SK-N-SH (cell line): ENCODE measurements at regions of chr10 and their contacts with region 1.

Region 1: DNA sequence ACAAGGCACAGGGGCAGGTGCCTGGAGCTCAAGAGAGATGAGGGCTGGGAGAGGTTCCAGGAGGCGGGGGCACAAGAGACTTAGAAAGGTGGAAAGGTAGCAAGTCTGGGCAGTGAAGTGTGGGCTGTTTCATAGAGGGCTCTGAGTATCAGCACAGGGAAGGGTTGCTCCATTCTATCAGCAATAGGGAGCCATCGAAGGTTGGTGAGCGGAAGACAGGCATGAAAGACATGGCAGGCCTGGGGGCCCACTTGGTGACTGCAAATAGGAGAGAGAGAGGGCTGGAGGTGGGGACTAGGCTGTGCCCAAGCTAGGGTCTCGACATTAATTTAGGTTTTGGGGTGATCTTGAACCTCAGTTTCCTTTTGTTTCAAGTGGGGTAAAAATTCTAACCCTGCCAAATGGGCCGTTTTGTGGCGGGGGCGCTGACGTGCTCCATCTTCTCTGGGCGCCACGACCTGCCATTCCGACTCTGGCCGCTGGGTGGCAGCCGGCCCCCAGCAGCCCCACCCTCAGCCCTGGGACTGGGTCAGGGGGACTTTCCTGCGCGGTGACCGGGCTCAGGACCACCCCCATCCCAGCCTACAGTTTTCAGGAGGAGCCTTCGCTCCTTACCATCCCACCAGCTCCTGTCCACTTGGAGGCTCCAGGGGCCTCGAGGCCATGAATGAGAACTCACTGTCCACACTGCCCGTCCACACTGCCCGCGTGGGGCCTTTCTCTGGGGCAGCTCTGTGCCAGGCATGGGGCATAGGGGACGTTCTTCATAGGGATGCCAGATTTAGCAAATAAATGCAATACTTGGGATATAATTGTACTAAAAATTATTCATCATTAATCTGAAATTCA is 37.2 kb upstream of the PCBD1 start:
- DNase-seq: peak; percentile 92
- H3K4me3 ChIP-seq: peak overlapping the region in 1 of 2 experiments; percentile 32; a peak in 1 of 4 replicates
- H3K27ac ChIP-seq: no peak overlapping the region
- H3K4me1 ChIP-seq: peaks cover 5 to 19% of the 10 kb centered on the region in 2 experiments; a peak in 2 of 4 replicates
- H3K27me3 ChIP-seq: peaks cover 13% of the 10 kb centered on the region; the same call in 1 of the 2 replicates
- CTCF ChIP-seq: peak; percentile 89
- EP300 ChIP-seq: no peak
- RAD21 ChIP-seq: peak; percentile 89

Region 2: GRCh38 chr10:70391654-70392053 is 533.9 kb before region 1 on chr10:
- CTCF ChIA-PET with region 1: no interaction called
- POLR2A ChIA-PET with region 1: no interaction called
- DNase-seq: no peak
- H3K4me3 ChIP-seq: no peak overlapping the region
- H3K27ac ChIP-seq: no peak overlapping the region
- H3K4me1 ChIP-seq: no peaks in the 10 kb centered on the region
- H3K27me3 ChIP-seq: no peaks in the 10 kb centered on the region; the same call in 1 of the 2 replicates
- CTCF ChIP-seq: no peak
- EP300 ChIP-seq: no peak
- RAD21 ChIP-seq: no peak

Region 3: DNA sequence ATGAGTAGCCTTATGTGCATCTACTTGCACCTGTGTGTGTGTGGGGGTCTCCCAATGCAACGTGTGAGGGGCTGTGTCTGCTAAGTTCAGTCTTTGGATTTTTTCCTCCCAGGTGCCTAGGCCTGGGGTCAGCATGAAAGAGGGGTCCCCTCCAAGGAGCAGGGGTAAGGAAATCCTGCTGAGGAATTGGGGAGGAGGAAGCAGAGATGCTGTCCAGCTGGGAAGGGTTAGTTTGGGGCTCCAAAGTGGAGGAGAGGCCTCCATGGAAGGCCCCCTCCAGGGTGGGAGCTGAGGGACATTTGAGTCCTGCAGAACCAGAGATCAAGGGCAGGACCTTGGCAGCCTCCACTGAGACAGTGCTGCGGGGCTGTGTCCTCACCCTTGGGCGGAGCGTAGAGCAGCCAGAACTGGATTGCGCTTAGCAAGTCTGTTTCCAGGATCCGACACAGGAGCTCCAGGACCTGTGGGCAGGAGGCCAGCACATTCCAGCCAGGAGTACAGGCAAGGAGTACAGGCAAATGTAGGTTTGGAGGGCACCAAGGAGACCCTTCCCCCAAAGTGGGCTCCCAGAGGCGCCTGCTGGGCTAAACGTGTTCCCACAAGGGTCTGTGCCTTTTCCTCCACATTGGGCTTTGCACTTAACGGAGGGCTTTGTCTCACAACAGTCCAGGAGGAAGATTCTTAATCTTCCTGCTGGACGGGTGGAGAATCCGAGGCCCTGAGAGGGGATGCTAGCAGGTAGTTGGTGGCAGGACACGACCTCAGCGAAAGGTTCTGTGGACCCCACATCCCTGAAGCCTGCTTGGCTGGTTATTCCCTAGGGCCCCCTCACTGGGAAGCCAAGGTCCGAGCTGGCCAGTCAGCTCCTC is 150.6 kb before region 1 on chr10:
- CTCF ChIA-PET with region 1: no interaction called
- POLR2A ChIA-PET with region 1: no interaction called
- DNase-seq: peak; percentile 12
- H3K4me3 ChIP-seq: no peak overlapping the region
- H3K27ac ChIP-seq: no peak overlapping the region
- H3K4me1 ChIP-seq: peaks cover 0 to 10% of the 10 kb centered on the region in 2 experiments; a peak in 1 of 4 replicates
- H3K27me3 ChIP-seq: no peaks in the 10 kb centered on the region; the same call in 1 of the 2 replicates
- CTCF ChIP-seq: no peak
- EP300 ChIP-seq: no peak
- RAD21 ChIP-seq: no peak

Region 4: GRCh38 chr10:70903262-70903921 is 22.2 kb before region 1 on chr10:
- CTCF ChIA-PET with region 1: interaction called, 130 read pairs
- POLR2A ChIA-PET with region 1: no interaction called
- DNase-seq: peak; percentile 85
- H3K4me3 ChIP-seq: no peak overlapping the region; a peak in 1 of 4 replicates
- H3K27ac ChIP-seq: peak overlapping the region in 1 of 2 experiments; percentile 12; a peak in 1 of 4 replicates
- H3K4me1 ChIP-seq: peaks cover 0 to 8% of the 10 kb centered on the region in 2 experiments; a peak in 1 of 4 replicates
- H3K27me3 ChIP-seq: no peaks in the 10 kb centered on the region
- CTCF ChIP-seq: peak; percentile 88
- EP300 ChIP-seq: no peak
- RAD21 ChIP-seq: peak; percentile 91

Region 5: GRCh38 chr10:70940834-70941568 is 15.4 kb after region 1 on chr10:
- CTCF ChIA-PET with region 1: interaction called, 29 read pairs
- POLR2A ChIA-PET with region 1: no interaction called
- DNase-seq: peak; percentile 49
- H3K4me3 ChIP-seq: no peak overlapping the region
- H3K27ac ChIP-seq: no peak overlapping the region
- H3K4me1 ChIP-seq: peaks cover 0 to 15% of the 10 kb centered on the region in 2 experiments; a peak in 1 of 4 replicates
- H3K27me3 ChIP-seq: peaks cover 12% of the 10 kb centered on the region; the same call in 1 of the 2 replicates
- CTCF ChIP-seq: no peak
- EP300 ChIP-seq: no peak
- RAD21 ChIP-seq: no peak

Region 6: DNA sequence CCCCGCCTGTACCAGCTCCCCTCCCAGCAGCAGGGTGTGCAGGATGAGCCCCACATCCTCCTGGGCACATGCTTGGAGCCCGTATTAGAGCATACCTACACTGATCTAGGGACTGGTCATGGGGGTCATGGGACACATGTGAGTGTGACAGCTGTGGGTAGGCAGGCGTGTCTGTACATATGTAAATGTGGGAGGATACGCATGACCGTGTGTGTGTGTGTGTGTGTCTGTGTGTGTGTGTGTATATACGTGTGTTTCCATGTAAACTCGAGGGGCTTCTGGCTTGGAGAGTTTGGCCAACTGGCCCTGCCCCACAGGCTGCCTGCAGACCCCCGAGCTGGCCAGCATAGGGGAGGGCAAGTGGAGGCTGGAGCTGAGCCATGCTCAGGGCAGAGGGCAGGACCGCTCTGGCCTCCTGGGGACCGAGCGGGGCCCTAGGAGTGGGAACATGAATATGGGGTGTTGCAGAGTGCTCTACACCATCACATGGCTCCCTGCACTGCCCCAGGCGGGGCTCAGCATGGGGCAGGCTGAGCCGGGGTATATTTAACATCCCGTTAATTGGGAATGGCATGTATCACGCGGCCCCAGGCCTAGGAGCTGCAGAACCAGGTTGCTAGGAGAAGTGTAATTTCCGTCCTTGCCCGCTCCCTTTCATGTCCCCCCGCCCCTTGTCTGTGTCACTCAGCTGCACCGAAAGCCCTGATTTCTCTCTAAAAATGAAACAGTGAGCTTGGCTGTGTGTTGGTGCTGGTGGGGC is 115.4 kb after region 1 on chr10:
- CTCF ChIA-PET with region 1: interaction called, 15 read pairs
- POLR2A ChIA-PET with region 1: no interaction called
- DNase-seq: peak; percentile 77
- H3K4me3 ChIP-seq: no peak overlapping the region
- H3K27ac ChIP-seq: peak overlapping the region in 1 of 2 experiments; percentile 11; a peak in 1 of 4 replicates
- H3K4me1 ChIP-seq: peaks cover 0 to 51% of the 10 kb centered on the region in 2 experiments; a peak in 1 of 4 replicates
- H3K27me3 ChIP-seq: no peaks in the 10 kb centered on the region; the same call in 1 of the 2 replicates
- CTCF ChIP-seq: no peak
- EP300 ChIP-seq: peak in 1 of 2 experiments; percentile 27; a peak in 1 of 4 replicates
- RAD21 ChIP-seq: no peak

Region 7: GRCh38 chr10:71075086-71075758 is 149.6 kb after region 1 on chr10:
- CTCF ChIA-PET with region 1: interaction called, 42 read pairs
- POLR2A ChIA-PET with region 1: no interaction called
- DNase-seq: peak; percentile 86
- H3K4me3 ChIP-seq: no peak overlapping the region
- H3K27ac ChIP-seq: peak overlapping the region in 1 of 2 experiments; percentile 56; a peak in 2 of 4 replicates
- H3K4me1 ChIP-seq: peaks cover 0 to 49% of the 10 kb centered on the region in 2 experiments; a peak in 1 of 4 replicates
- H3K27me3 ChIP-seq: 0 out of 2 replicates have a peak, but pooled peaks cover 5% of the 10 kb centered on the region
- CTCF ChIP-seq: no peak
- EP300 ChIP-seq: peak in 1 of 2 experiments; percentile 72; a peak in 2 of 4 replicates
- RAD21 ChIP-seq: no peak

Region 8: GRCh38 chr10:71222601-71223346 is 297.2 kb after region 1 on chr10:
- CTCF ChIA-PET with region 1: interaction called, 34 read pairs
- POLR2A ChIA-PET with region 1: no interaction called
- DNase-seq: no peak
- H3K4me3 ChIP-seq: no peak overlapping the region; a peak in 1 of 4 replicates
- H3K27ac ChIP-seq: peak overlapping the region; percentile 29 to 98
- H3K4me1 ChIP-seq: peaks cover 44 to 75% of the 10 kb centered on the region in 2 experiments
- H3K27me3 ChIP-seq: no peaks in the 10 kb centered on the region
- CTCF ChIP-seq: peak; percentile 27; the same call in 1 of the 2 replicates
- EP300 ChIP-seq: 0 out of 4 replicates have a peak, but pooled peaks of 1 of the 2 experiments have one; percentile 24
- RAD21 ChIP-seq: no peak

Region 9: GRCh38 chr10:71285180-71285545 is 359.6 kb after region 1 on chr10:
- CTCF ChIA-PET with region 1: interaction called, 52 read pairs
- POLR2A ChIA-PET with region 1: no interaction called
- DNase-seq: peak; percentile 85
- H3K4me3 ChIP-seq: no peak overlapping the region
- H3K27ac ChIP-seq: no peak overlapping the region; a peak in 1 of 4 replicates
- H3K4me1 ChIP-seq: peaks cover 0 to 22% of the 10 kb centered on the region in 2 experiments; a peak in 2 of 4 replicates
- H3K27me3 ChIP-seq: no peaks in the 10 kb centered on the region
- CTCF ChIP-seq: peak; percentile 76
- EP300 ChIP-seq: no peak
- RAD21 ChIP-seq: peak; percentile 83